Posterior vena cava (tissue), 2 donors: ENCODE measurements at regions of chr7 and their contacts with region 1.

Region 1: GRCh38 chr7:111098011-111098925 is 7.3 kb downstream of the LRRN3 start:
- DNase-seq: no peak

Region 2: GRCh38 chr7:111735661-111736551 is 637.6 kb after region 1 on chr7:
- intact Hi-C with region 1: loop called (anchors 10 kb)
- DNase-seq: no peak